Posterior vena cava (tissue), 2 donors: ENCODE measurements at regions of chr19 and their contacts with region 1.

Region 1: DNA sequence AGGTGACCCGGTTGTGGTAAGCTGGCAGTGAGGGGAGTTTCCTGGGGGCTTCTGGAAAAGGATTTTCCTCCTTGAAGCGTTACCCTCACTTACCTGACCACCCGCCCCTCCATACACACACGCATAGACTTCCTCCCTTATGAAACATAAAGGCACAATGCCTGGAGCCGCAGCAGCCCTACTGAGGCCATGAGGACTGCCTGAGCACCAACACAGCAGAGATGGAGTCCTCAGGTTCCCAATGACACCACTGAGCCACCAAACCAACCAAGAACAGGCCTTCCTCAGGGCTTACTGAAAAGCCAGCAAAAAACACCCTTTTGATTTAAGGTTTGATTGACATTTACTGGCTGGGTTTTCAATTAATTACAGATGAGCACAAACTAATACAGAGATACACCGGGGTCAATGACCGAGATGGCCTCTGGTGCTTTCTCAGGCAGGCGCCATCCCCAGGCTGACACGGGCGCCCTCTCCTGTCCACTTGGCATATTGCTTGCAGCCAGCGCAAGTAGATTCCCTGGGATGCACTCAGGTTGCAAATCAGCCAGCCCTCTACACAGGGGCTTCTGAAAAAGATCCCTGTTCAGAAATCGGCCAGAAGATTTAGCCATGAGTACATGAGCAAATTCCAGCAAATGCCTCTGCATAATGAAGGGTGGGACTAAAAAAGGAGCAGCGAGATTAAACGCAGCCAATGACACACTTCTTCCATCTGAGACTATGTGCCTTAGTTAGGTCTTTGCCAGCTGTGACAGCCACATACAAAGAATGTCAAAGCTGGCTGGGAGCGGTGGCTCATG is 14.8 kb downstream of the OPA3 start:
- DNase-seq: peak; percentile 85

Region 2: DNA sequence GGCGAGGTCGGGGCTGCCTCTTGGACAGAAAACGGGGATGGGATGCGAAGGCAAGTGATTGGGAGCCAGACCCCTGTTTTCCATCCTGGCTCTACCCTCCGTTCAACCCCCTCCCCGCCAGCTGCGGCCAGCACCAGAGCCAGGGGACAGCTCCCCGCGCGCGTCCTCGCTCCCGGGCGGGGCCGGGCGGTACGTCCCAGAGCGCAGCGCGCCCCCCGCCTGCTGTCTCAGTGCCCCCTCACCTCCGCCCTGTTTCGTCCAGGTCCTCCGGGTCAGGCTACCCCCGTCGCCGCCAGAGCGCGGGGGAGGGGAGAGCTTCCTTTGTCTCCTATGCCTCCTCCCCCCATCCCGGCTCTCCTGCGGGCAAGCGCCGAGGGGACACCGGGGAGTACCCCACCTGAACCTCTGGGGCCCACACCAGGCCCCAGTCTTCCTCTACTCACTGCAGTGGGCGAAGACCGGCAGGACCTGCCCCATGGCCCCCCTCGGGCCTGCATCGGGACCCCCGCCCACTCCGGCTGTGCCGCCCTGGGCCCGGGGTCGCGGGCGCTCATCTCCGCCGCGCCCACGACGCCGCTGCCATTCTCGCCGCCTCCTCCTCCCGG is 73.4 kb before region 1 on chr19:
- intact Hi-C with region 1: loop called in 1 of 2 experiments (anchors 2 kb)
- DNase-seq: no peak

Region 3: DNA sequence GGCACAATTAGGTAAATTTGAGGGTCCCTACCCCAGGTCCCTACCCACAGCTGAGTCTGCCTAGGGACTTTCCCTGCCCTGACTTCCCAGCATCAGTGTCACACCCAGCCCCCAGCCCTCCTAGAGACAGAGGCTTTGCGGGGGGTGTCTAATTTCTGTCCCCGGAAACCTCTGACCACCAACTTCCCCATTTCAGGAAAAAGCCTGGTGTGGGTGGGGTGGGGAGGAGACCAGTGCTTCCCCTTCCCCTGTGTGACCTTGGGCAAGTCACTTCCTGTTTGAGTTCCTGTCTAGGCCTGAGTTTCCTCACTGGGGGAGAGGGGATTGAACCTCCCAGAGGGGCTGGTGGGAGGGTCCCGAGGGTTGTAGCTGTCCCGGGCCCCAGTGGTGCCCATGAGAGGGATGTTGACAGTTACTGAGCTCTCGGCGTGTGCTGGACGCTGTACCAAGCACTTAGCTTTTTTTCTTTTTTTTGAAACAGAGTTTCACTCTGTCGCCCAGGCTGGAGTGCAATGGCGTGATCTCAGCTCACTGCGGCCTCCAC is 54.7 kb before region 1 on chr19:
- intact Hi-C with region 1: loop called in 1 of 2 experiments (anchors 10 kb)
- DNase-seq: no peak

Region 4: DNA sequence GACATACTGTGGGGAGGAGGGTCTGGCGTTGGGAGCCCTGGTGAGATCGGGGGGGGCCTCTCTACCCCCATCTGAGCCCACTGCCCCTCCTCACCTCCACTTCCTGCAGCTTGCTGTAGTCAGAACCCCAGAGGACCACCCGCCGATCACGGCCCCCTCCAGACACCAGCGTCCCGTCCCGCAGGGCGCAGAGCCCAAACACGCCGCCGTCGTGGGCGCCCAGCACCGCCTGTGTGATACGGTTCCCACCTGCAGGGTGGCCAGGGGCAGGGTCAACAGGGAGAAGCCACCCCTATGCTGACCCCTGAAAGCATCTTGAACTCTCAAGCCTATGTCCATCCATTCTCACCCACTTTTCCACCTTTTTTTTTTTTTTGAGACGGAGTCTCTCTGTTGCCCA is 51.6 kb after region 1 on chr19:
- intact Hi-C with region 1: no loop called
- DNase-seq: no peak